GM10248 (cell line): ENCODE measurements at regions of chr2 and their contacts with region 1.

Region 1: GRCh38 chr2:25567406-25567805 is 106.0 kb downstream of the DTNB start:
- DNase-seq: peak; percentile 63
- CTCF ChIP-seq: peak; percentile 49

Region 2: DNA sequence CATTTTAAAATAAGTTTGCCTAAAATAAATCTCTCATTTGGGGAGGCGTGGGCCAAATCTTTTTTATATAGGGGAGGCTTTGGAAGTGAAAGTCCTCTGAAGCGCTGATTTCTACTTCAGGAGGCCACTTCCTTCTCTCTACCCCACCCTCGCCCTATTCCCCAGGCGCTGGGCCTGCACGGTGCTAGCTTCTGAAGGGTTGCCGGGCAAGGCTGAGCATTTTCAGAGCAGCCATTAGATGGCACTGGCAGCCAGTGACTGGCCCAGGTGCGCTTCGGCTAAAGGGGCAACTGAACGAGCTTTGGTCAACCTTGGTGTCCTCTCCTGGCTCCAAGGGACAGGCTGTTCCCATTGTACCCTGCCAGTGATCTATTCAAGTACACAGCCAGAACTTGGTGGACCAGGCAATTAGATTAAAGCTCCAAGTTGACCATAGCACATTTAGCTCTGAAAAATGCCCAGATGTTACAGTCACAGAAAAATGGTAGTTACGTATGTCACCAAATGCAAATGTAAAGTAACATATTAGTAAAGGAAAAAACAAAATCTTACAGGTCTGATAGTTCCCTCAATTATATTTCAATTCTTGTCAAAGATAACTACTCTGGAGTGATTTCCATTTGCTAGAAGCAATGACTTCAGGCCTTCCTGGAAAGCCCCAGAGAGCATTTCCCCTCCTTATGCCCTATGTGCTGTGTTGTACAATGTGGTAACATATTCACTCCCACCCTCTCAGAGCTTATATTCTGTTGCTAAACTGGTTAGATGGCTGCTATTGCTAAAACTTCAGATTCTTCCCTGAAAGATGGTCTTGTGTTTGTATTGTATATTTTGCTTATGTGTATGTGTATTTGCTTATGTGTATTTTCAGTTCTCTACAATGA is 401.2 kb before region 1 on chr2:
- CTCF ChIA-PET with region 1: interaction called, 16 read pairs
- POLR2A ChIA-PET with region 1: no interaction called
- DNase-seq: peak; percentile 81
- CTCF ChIP-seq: peak; percentile 60

Region 3: GRCh38 chr2:25276569-25277465 is 290.6 kb before region 1 on chr2:
- CTCF ChIA-PET with region 1: interaction called, 19 read pairs
- POLR2A ChIA-PET with region 1: no interaction called
- DNase-seq: peak; percentile 90
- CTCF ChIP-seq: peak; percentile 93

Region 4: DNA sequence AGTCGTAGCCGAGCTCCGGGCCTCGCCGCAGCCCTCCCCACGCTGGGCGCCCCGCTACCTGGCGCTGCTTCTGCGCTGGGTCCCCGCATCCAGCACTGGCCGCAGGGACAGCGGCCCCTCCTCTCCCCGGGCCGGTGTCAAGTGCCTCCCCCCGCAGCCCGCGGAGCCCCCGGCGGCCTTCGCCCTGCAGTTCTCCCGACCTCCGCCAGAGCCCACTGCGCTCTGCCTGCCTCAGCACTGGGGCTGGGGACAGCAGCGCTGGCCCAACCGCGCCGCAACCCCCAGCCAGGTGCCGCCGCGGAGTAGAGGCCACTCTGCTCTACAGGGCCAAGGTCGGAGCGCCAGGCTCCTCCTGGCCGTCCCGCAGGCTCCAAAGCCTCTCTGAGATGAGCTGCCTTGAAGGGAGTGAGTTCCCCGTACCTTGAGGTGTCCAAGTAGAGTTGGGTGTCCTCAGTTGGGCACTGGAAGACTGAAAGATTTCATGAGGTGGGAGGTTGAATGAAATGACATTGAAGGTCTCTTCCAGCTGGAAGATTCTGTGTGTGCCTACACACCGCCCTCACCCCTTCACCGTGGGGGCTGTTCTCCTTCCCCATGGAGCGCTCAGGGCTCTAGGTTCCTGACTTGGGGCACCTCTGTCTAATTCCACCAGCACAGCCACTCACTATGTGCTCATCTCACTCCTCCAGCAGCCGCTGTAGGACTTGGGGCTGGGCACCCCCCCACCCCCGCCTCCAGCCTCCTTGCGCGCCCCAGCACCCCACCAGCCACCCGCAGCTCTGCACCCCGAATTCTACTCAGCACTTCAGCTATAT is 224.8 kb before region 1 on chr2:
- CTCF ChIA-PET with region 1: interaction called, 11 read pairs
- POLR2A ChIA-PET with region 1: no interaction called
- DNase-seq: peak; percentile 93
- CTCF ChIP-seq: peak; percentile 96

Region 5: DNA sequence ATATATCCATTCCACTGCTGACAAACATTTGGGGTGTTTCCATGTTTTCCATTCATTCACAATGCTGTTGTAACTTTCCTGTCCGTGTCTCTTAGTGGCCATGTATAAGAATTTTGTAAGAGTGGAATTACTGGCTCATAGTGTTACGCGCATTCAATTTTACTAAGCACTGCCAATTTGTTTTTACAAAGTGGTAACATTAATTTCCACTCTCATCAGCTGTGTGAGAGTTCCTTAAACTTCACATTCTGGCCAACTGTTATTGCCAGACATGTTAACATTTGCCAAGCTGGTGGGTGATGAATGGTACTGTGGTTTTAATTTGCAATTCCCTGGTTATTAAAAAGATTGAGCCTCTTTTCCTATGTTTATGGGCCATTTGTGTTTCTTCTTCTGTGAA is 28.3 kb before region 1 on chr2:
- CTCF ChIA-PET with region 1: no interaction called
- POLR2A ChIA-PET with region 1: no interaction called
- DNase-seq: no peak
- CTCF ChIP-seq: no peak

Region 6: DNA sequence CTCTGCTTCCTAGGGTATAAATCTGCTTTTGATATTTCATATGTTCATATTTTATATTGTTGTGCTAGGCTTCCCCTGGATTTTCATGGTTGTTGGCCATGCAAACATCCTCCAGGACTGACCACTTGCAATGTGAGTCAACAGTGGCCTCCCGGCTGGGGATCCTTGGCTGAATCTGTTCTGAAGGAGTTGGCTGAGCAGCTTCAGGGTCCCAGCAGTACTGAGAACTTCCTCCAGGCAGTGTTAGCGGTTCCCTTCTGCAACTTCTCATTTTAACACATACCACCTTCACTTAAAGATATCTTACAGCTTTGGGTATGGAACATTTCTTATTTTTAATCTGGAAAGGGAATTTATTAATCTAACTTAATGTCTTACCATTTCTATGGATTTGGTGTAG is 16.1 kb before region 1 on chr2:
- CTCF ChIA-PET with region 1: interaction called, 24 read pairs
- POLR2A ChIA-PET with region 1: no interaction called
- DNase-seq: no peak
- CTCF ChIP-seq: no peak

Region 7: GRCh38 chr2:26068602-26069298 is 501.3 kb after region 1 on chr2:
- CTCF ChIA-PET with region 1: no interaction called
- POLR2A ChIA-PET with region 1: no interaction called
- DNase-seq: peak; percentile 74
- CTCF ChIP-seq: no peak